ENCODE measurements at regions of chr14 and their contacts with region 1.

Region 1: DNA sequence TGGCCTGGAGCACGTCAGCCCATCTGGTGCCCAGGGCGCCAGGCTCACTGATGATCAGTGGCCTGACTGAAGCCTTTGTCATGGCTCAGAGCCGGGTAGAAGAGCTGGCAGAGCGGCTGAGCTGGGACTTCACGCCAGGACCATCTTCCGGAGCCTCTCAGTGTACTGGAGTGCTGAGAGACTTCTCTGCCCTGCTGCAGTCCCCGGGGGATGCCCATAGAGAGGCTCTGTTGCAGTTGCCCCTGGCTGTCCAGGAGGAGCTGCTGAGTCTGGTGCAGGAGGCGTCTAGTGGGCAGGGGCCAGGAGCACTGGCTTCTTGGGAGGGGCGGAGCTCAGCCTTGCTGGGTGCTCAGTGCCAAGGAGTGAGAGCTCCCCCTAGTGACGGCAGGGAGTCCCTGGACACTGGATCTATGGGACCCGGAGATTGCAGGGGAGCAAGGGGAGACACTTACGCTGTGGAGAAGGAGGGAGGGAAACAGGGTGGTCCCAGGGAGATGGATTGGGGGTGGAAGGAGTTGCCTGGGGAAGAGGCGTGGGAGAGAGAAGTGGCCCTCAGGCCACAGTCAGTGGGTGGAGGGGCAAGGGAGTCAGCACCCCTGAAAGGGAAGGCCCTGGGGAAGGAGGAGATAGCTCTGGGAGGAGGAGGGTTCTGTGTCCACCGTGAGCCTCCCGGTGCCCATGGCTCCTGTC is 2.0 kb downstream of the KHNYN start:
- DNase-seq: peak; percentile 91
- ATAC-seq: peak; percentile 63
- H3K4me3 ChIP-seq: no peak overlapping the region; the same call in 1 of the 2 replicates
- H3K27ac ChIP-seq: peak overlapping the region; percentile 91; the same call in 1 of the 2 replicates
- H3K4me1 ChIP-seq: peaks cover 18% of the 10 kb centered on the region; the same call in 1 of the 2 replicates
- H3K27me3 ChIP-seq: no peaks in the 10 kb centered on the region
- CTCF ChIP-seq: peak; percentile 98
- POLR2A ChIP-seq: 0 out of 2 replicates have a peak, but pooled peaks have one; percentile 52
- RAD21 ChIP-seq: peak; percentile 96

Region 2: DNA sequence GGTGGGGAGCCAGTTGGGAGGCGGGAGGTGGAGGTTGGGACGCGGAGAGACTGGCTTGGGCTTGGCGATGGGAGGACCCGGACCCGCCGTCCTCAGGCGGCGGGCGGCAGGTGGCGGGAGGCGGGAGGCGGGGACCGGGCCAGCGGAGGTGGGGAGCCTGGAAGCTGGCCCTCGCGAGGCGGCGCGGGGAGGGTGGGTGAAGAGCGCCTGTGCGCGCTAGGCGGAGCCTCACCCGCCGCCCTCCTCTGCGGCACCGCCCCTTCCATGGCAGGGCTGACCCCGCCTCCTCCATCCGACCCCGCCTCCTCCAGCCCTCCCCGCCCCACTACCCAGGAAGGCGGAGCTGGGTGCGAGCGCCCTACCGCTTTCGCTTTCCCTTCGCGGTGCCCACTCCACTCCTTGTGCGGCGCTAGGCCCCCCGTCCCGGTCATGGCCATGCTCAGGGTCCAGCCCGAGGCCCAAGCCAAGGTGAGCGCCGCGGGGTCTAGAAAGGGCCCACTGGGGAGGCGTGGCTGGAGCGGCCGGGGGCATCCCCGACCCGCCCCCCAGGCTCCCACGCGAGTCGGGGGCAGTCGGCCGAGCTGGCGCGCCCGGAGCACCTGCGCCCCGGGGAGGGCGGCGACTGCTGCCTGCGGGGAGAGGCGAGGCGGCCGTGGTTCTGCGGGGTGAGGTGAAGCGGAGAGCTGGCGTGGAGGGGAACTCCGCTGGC is 295.7 kb before region 1 on chr14 and contains the start of gene PSME1:
- CTCF ChIA-PET with region 1: no interaction called
- POLR2A ChIA-PET with region 1: no interaction called
- dilution Hi-C with region 1: no loop called
- in situ Hi-C with region 1: loop called (anchors 10 kb)
- intact Hi-C with region 1: no loop called
- DNase-seq: peak; percentile 82
- ATAC-seq: peak; percentile 99
- H3K4me3 ChIP-seq: peak within 1 kb of the TSS; percentile 97
- H3K27ac ChIP-seq: peak within 1 kb of the TSS; percentile 79
- H3K4me1 ChIP-seq: peaks cover 11% of the 10 kb centered on the region
- H3K27me3 ChIP-seq: no peaks in the 10 kb centered on the region
- CTCF ChIP-seq: no peak
- POLR2A ChIP-seq: no peak
- RAD21 ChIP-seq: no peak
- total RNA-seq, gene PSME1: 42.8 and 55.3 TPM in 2 replicates

Region 3: GRCh38 chr14:24232121-24232644 is 199.5 kb before region 1 on chr14 and contains the start of gene NEDD8:
- CTCF ChIA-PET with region 1: no interaction called
- POLR2A ChIA-PET with region 1: no interaction called
- dilution Hi-C with region 1: no loop called
- in situ Hi-C with region 1: loop called (anchors 10 kb)
- intact Hi-C with region 1: no loop called
- DNase-seq: peak; percentile 97
- ATAC-seq: peak; percentile 91
- H3K4me3 ChIP-seq: peak within 1 kb of the TSS; percentile 56
- H3K27ac ChIP-seq: peak within 1 kb of the TSS; percentile 91
- H3K4me1 ChIP-seq: peaks cover 8% of the 10 kb centered on the region
- H3K27me3 ChIP-seq: no peaks in the 10 kb centered on the region
- CTCF ChIP-seq: no peak
- POLR2A ChIP-seq: peak; percentile 17; the same call in 1 of the 2 replicates
- RAD21 ChIP-seq: no peak
- total RNA-seq, gene NEDD8: 167 and 224 TPM in 2 replicates

Region 4: DNA sequence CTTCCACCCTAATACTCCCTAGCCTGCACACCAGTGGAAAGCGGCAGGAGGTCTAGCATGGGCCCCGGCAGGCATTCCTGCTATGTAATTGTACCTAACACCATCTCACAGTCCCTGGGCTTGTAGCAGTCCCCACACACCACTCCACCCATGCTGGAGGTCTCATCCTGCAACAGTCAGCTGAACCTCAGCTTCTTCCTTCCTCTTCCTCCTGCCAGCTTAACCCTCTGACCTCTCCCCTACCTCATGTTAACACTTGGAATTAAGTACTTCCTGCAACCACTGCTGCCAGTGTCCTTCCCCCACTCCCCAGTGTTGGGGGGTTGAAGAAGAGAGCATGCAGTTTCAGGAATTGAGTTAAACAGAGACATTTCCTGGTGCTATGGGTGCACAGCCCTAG is 104.4 kb before region 1 on chr14:
- CTCF ChIA-PET with region 1: interaction called, 63 read pairs
- POLR2A ChIA-PET with region 1: interaction called, 3 read pairs
- dilution Hi-C with region 1: no loop called
- in situ Hi-C with region 1: loop called (anchors 5 kb)
- intact Hi-C with region 1: loop called (anchors 1 kb)
- DNase-seq: no peak
- ATAC-seq: no peak
- H3K4me3 ChIP-seq: no peak overlapping the region
- H3K27ac ChIP-seq: no peak overlapping the region
- H3K4me1 ChIP-seq: no peaks in the 10 kb centered on the region; the same call in 1 of the 2 replicates
- H3K27me3 ChIP-seq: peaks cover 31% of the 10 kb centered on the region
- CTCF ChIP-seq: no peak
- POLR2A ChIP-seq: no peak
- RAD21 ChIP-seq: no peak

Region 5: GRCh38 chr14:24351517-24351916 is 80.2 kb before region 1 on chr14:
- CTCF ChIA-PET with region 1: interaction called, 11 read pairs
- POLR2A ChIA-PET with region 1: no interaction called
- dilution Hi-C with region 1: no loop called
- in situ Hi-C with region 1: no loop called
- intact Hi-C with region 1: no loop called
- DNase-seq: peak; percentile 43
- ATAC-seq: peak; percentile 83
- H3K4me3 ChIP-seq: no peak overlapping the region
- H3K27ac ChIP-seq: no peak overlapping the region
- H3K4me1 ChIP-seq: peaks cover 9% of the 10 kb centered on the region
- H3K27me3 ChIP-seq: peaks cover 24% of the 10 kb centered on the region
- CTCF ChIP-seq: no peak
- POLR2A ChIP-seq: no peak
- RAD21 ChIP-seq: no peak

Region 6: DNA sequence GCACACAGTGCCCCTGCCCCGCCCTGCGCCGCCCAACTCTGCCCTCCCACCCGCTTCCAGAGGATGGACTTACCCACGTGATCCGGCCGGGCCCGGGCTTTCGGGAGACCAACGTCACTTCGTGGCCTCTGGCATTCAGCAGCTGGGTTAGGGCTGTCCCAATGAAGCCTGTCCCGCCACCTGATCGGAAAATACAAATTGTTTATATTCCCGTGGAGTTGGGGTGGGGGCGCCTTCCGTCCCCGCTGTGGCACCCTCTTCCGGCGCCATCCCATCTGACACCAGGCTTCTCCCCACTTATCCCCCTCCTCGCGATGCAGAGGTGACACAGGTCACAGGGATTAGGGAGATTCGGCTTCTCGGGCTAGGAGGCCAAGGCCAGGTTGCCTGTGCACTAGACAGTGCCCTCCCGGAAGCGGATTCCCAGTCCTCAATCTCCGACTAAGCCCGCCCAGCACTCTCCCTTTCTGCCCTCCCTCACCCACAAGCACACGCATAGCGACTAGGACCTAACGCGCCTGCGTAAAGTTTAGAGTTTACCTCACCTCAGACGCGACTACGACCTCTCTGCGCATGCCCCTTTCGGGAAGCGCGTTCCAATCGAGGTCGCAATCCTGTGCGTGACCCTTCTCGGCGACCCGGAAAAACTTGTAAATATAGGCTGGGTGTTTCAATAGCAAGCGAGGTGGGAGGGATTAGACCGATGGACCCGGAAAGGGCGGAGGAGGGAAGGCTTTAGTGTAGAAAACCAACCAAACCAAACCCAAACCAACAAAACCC is 10.7 kb after region 1 on chr14 and contains the start of gene SDR39U1:
- CTCF ChIA-PET with region 1: interaction called, 12 read pairs
- POLR2A ChIA-PET with region 1: interaction called, 5 read pairs
- dilution Hi-C with region 1: no loop called
- in situ Hi-C with region 1: no loop called
- intact Hi-C with region 1: no loop called
- DNase-seq: peak; percentile 99
- ATAC-seq: peak; percentile 92
- H3K4me3 ChIP-seq: peak within 1 kb of the TSS; percentile 54
- H3K27ac ChIP-seq: peak within 1 kb of the TSS; percentile 91
- H3K4me1 ChIP-seq: peaks cover 2% of the 10 kb centered on the region
- H3K27me3 ChIP-seq: no peaks in the 10 kb centered on the region
- CTCF ChIP-seq: no peak
- POLR2A ChIP-seq: peak; percentile 92
- RAD21 ChIP-seq: no peak; the same call in 1 of the 2 replicates
- total RNA-seq, gene SDR39U1: 5.0 and 7.5 TPM in 2 replicates

Region 7: DNA sequence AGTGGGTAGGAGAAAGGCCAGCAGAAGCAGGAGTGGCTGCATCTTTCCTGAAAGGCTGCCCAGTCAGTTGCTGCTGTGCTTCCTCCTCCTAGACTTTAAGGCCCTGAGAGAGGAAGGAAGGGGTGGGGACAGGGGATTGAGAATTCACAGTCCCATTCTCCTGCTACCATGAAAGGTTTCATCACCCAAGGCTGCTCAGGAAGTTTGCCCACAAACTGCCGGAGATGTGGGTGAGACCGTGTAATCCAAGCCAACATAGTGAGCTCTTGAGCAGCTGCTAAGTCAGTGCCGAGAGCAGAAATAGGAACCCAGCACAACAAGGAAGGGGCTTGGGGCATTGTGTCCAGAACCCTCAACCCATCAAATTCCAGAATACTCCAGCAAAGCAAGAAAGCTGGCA is 144.5 kb after region 1 on chr14 and contains the start of gene CTSG:
- CTCF ChIA-PET with region 1: no interaction called
- POLR2A ChIA-PET with region 1: no interaction called
- dilution Hi-C with region 1: no loop called
- in situ Hi-C with region 1: no loop called
- intact Hi-C with region 1: no loop called
- DNase-seq: no peak
- ATAC-seq: no peak
- H3K4me3 ChIP-seq: no peak within 1 kb of the TSS
- H3K27ac ChIP-seq: no peak within 1 kb of the TSS
- H3K4me1 ChIP-seq: no peaks in the 10 kb centered on the region
- H3K27me3 ChIP-seq: no peaks in the 10 kb centered on the region
- CTCF ChIP-seq: no peak
- POLR2A ChIP-seq: no peak
- RAD21 ChIP-seq: no peak
- total RNA-seq, gene CTSG: not detected in 2 replicates

Region 8: DNA sequence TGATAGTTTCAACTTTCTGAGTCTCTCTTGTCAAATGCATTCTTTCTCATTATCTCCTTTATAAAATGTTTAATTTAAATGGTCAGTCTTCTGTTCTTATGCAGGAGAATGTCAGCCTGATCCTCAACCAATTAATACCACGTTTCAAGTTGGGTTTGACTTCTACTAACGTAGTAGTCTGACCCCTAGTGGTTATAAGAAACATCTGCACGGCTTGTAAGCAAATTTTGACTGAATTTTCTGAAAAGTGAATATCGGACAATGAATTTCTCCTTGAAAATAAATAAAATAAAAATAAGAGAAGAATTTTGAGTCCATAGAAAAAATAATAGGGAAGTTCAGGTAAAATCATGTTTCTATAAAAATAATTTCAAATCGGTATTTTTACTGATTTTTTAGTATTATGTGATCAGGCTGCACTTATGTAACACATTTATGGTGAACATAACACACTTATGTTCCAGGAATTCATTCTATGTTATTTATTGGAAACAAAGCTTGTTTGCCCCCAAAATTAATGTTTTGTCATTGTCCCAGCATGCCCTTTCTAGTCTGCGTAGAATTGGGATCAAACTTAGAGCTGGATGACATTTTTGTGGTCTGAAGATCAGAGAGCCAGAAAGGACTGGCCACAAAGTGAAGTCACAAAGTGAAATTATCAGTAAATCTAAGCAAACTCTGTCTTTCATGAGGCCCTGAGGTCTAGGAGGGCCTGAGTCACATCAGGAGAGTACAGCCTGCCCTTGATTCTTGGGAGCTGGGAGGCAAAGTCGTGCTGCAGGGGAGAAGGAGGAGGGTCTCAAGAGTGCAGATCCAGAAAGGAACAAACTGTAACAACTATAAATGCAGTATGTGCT is 719.4 kb after region 1 on chr14:
- CTCF ChIA-PET with region 1: no interaction called
- POLR2A ChIA-PET with region 1: no interaction called
- dilution Hi-C with region 1: no loop called
- in situ Hi-C with region 1: no loop called
- intact Hi-C with region 1: no loop called
- DNase-seq: peak; percentile 71
- ATAC-seq: peak; percentile 82
- H3K4me3 ChIP-seq: no peak overlapping the region
- H3K27ac ChIP-seq: no peak overlapping the region
- H3K4me1 ChIP-seq: no peaks in the 10 kb centered on the region
- H3K27me3 ChIP-seq: peaks cover 1% of the 10 kb centered on the region
- CTCF ChIP-seq: peak; percentile 78
- POLR2A ChIP-seq: no peak
- RAD21 ChIP-seq: peak; percentile 76

Measured in IMR-90 (cell line).